Ovary (tissue), 10 donors: ENCODE measurements at regions of chr5 and their contacts with region 1.

Region 1: DNA sequence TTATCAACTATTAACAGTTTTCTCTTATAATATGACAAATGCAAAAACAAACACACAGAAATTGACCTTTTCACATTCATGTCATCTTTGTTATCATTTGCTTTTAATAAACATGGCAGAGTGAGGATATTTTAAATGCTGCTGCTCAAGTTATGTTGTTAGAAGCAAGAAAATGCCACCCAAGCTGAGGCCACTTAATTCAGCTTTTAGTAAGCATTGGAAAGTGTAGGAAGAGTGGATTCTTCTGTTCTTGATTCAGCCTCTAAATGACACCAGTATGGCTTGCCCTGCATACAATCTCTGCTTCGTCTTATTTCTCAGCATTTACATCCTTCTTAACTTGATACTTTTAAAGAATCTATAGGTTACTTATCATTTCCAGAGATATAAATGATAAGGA is 420.4 kb upstream of the POU5F2 start:
- DNase-seq: no peak
- H3K4me3 ChIP-seq: no peak overlapping the region
- H3K27ac ChIP-seq: no peak overlapping the region
- H3K4me1 ChIP-seq: no peaks in the 10 kb centered on the region
- H3K27me3 ChIP-seq: no peaks in the 10 kb centered on the region
- CTCF ChIP-seq: no peak
- EP300 ChIP-seq: no peak
- POLR2A ChIP-seq: no peak

Region 2: GRCh38 chr5:93201061-93201460 is 960.7 kb before region 1 on chr5:
- intact Hi-C with region 1: no loop called
- DNase-seq: no peak
- H3K4me3 ChIP-seq: no peak overlapping the region
- H3K27ac ChIP-seq: no peak overlapping the region
- H3K4me1 ChIP-seq: peaks cover 2% of the 10 kb centered on the region
- H3K27me3 ChIP-seq: no peaks in the 10 kb centered on the region
- CTCF ChIP-seq: no peak
- EP300 ChIP-seq: no peak
- POLR2A ChIP-seq: no peak

Region 3: GRCh38 chr5:94086206-94086605 is 75.6 kb before region 1 on chr5:
- intact Hi-C with region 1: loop called in 1 of 4 experiments (anchors 2 kb)
- DNase-seq: no peak
- H3K4me3 ChIP-seq: no peak overlapping the region
- H3K27ac ChIP-seq: no peak overlapping the region
- H3K4me1 ChIP-seq: no peaks in the 10 kb centered on the region
- H3K27me3 ChIP-seq: no peaks in the 10 kb centered on the region
- CTCF ChIP-seq: no peak
- EP300 ChIP-seq: no peak
- POLR2A ChIP-seq: no peak